K562 (cell line): ENCODE measurements at regions of chr1 and their contacts with region 1.

Region 1: DNA sequence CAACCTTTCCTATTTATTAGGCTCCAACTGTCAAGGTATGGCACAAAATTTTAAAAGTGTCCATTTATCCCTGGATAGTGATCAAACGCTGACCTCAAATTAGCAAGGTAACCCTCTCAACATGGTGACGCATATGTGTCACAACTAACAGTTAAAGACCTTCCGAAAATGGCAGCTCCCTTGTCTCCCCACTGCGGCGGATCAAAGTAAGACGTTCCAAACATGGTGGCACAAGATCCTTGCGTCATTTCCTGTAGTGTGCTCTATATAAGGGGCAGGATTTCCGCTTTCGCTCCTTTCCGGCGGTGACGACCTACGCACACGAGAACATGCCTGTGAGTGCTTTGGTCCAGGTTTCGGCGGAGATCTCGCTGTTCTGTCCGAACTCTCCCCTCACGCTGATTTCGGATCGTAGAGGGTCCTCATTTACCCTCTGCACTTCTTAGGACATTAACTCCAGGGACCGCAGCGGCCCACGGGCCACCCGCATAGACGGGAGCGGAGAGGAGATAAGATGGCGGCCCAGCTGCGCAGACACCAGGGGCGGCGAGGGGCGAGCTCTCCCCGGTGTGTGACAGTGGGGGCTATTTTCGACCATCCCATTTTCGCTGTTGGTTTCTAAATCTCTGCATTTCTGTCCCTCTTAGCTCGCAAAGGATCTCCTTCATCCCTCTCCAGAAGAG is at the start of gene RPS27:
- DNase-seq: peak; percentile 82 to 98 (median 89)
- ATAC-seq: peak; percentile 84
- H3K4me3 ChIP-seq: peak within 1 kb of the TSS; percentile 81
- H3K27ac ChIP-seq: peak within 1 kb of the TSS; percentile 98
- H3K4me1 ChIP-seq: peaks cover 6 to 11% of the 10 kb centered on the region in 2 experiments; a peak in 3 of 5 replicates
- H3K27me3 ChIP-seq: no peaks in the 10 kb centered on the region
- CTCF ChIP-seq: peak in 1 of 3 experiments; percentile 26; a peak in 1 of 6 replicates
- EP300 ChIP-seq: peak; percentile 53; the same call in 1 of the 2 replicates
- POLR2A ChIP-seq: peak; percentile 100
- RAD21 ChIP-seq: peak; percentile 25 to 26; a peak in 1 of 4 replicates
- polyA plus RNA-seq, gene RPS27: 6,302 to 8,843 TPM

Region 2: GRCh38 chr1:153404768-153405167 is 585.8 kb before region 1 on chr1:
- CTCF ChIA-PET with region 1: no interaction called
- POLR2A ChIA-PET with region 1: no interaction called
- in situ Hi-C with region 1: no loop called
- intact Hi-C with region 1: no loop called
- DNase-seq: peak; percentile 71 to 78 (median 75)
- ATAC-seq: peak; percentile 84
- H3K4me3 ChIP-seq: no peak overlapping the region
- H3K27ac ChIP-seq: no peak overlapping the region
- H3K4me1 ChIP-seq: no peaks in the 10 kb centered on the region; a peak in 1 of 5 replicates
- H3K27me3 ChIP-seq: peaks cover 8 to 27% of the 10 kb centered on the region in 2 experiments; a peak in 3 of 5 replicates
- CTCF ChIP-seq: peak; percentile 68 to 85 (median 81)
- EP300 ChIP-seq: no peak
- POLR2A ChIP-seq: no peak
- RAD21 ChIP-seq: peak in 1 of 2 experiments; percentile 50; a peak in 3 of 4 replicates

Region 3: GRCh38 chr1:153510984-153511410 is 479.6 kb before region 1 on chr1:
- CTCF ChIA-PET with region 1: interaction called, 19 read pairs
- POLR2A ChIA-PET with region 1: no interaction called
- in situ Hi-C with region 1: loop called (anchors 10 kb)
- intact Hi-C with region 1: loop called (anchors 5 kb)
- DNase-seq: peak; percentile 85 to 86 (median 86)
- ATAC-seq: peak; percentile 91
- H3K4me3 ChIP-seq: no peak overlapping the region
- H3K27ac ChIP-seq: no peak overlapping the region
- H3K4me1 ChIP-seq: peaks cover 7 to 21% of the 10 kb centered on the region in 2 experiments; a peak in 3 of 5 replicates
- H3K27me3 ChIP-seq: no peaks in the 10 kb centered on the region
- CTCF ChIP-seq: peak; percentile 95 to 96 (median 95)
- EP300 ChIP-seq: no peak
- POLR2A ChIP-seq: no peak
- RAD21 ChIP-seq: peak; percentile 97

Region 4: GRCh38 chr1:153775458-153776327 is 214.9 kb before region 1 on chr1:
- CTCF ChIA-PET with region 1: no interaction called
- POLR2A ChIA-PET with region 1: interaction called, 11 read pairs
- in situ Hi-C with region 1: no loop called
- intact Hi-C with region 1: loop called (anchors 5 kb)
- DNase-seq: peak in 3 of 4 experiments; percentile 66 to 77 (median 73)
- ATAC-seq: peak; percentile 73
- H3K4me3 ChIP-seq: peak overlapping the region; percentile 48
- H3K27ac ChIP-seq: no peak overlapping the region
- H3K4me1 ChIP-seq: peaks cover 10 to 55% of the 10 kb centered on the region in 2 experiments
- H3K27me3 ChIP-seq: no peaks in the 10 kb centered on the region
- CTCF ChIP-seq: no peak
- EP300 ChIP-seq: no peak
- POLR2A ChIP-seq: no peak
- RAD21 ChIP-seq: no peak

Region 5: DNA sequence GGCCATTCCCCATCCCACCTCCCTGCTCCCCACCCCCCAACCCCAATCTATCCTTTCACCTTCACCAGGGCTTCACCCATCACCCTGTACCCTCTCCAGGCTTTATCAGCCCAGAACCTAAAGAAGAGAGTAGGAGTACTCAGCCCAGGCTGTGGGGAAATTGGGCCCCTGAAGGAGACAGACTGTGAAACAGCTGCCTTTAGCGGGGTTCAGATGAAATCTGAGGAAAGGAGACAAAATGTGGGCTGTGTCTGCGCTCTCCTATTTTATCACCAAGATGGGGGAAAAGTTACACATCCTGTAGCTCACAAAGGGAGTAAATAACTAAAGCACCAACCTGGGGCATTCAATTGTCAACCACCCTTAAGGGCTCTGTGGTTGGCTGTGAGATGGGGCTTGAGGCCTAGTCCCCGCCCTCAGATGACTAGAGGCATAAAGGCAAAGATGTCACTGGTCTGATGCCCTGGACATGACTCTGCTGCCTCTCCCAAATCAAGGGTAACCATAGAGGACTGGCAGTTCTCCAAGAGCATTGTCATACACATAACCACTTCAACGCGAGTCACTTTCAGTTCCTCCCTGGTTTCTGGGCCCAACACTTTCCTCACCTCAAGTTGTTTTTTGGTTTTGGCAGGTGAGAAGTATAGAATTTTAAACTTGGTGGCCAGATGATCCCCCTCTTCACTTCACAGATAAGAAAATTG is 185.4 kb before region 1 on chr1:
- CTCF ChIA-PET with region 1: no interaction called
- POLR2A ChIA-PET with region 1: interaction called, 23 read pairs
- in situ Hi-C with region 1: no loop called
- intact Hi-C with region 1: no loop called
- DNase-seq: peak in 2 of 4 experiments; percentile 67 to 77
- ATAC-seq: peak; percentile 89
- H3K4me3 ChIP-seq: no peak overlapping the region
- H3K27ac ChIP-seq: peak overlapping the region; percentile 40; the same call in 2 of the 3 replicates
- H3K4me1 ChIP-seq: peaks cover 5 to 20% of the 10 kb centered on the region in 2 experiments; a peak in 4 of 5 replicates
- H3K27me3 ChIP-seq: no peaks in the 10 kb centered on the region
- CTCF ChIP-seq: no peak
- EP300 ChIP-seq: no peak
- POLR2A ChIP-seq: no peak
- RAD21 ChIP-seq: no peak

Region 6: GRCh38 chr1:153958111-153958960 is 32.3 kb before region 1 on chr1 and contains the start of gene CRTC2:
- CTCF ChIA-PET with region 1: no interaction called
- POLR2A ChIA-PET with region 1: interaction called, 20 read pairs
- in situ Hi-C with region 1: no loop called
- intact Hi-C with region 1: no loop called
- DNase-seq: peak; percentile 89 to 98 (median 94)
- ATAC-seq: peak; percentile 87
- H3K4me3 ChIP-seq: peak within 1 kb of the TSS; percentile 94
- H3K27ac ChIP-seq: peak within 1 kb of the TSS; percentile 83
- H3K4me1 ChIP-seq: peaks cover 27 to 33% of the 10 kb centered on the region in 2 experiments
- H3K27me3 ChIP-seq: no peaks in the 10 kb centered on the region
- CTCF ChIP-seq: peak in 1 of 3 experiments; percentile 8; a peak in 1 of 6 replicates
- EP300 ChIP-seq: no peak
- POLR2A ChIP-seq: peak; percentile 74
- RAD21 ChIP-seq: 0 out of 4 replicates have a peak, but pooled peaks of 1 of the 2 experiments have one; percentile 8
- polyA plus RNA-seq, gene CRTC2: 2.7 to 3.3 TPM

Region 7: DNA sequence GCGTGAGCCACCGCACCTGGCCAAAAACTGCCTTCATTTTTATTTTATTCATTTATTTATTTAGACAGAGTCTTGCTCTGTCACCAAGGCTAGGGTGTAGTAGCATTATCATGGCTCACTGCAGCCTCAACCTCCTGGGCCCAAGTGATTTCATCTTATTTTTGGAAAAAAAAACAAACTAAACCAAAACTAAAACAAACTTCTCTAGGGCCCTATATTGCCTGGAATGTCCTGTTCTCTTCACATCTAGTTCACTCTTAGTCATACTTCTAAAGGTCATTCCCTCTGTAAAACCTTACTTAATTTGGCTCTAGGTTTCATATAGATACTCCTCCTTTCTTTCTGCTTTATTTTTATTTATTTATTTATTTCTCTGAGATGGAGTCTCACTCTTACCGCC is 15.5 kb after region 1 on chr1:
- CTCF ChIA-PET with region 1: no interaction called
- POLR2A ChIA-PET with region 1: interaction called, 83 read pairs
- in situ Hi-C with region 1: no loop called
- intact Hi-C with region 1: no loop called
- DNase-seq: no peak
- ATAC-seq: no peak
- H3K4me3 ChIP-seq: no peak overlapping the region
- H3K27ac ChIP-seq: no peak overlapping the region
- H3K4me1 ChIP-seq: no peaks in the 10 kb centered on the region; a peak in 1 of 5 replicates
- H3K27me3 ChIP-seq: no peaks in the 10 kb centered on the region
- CTCF ChIP-seq: no peak
- EP300 ChIP-seq: no peak
- POLR2A ChIP-seq: no peak
- RAD21 ChIP-seq: no peak

Region 8: GRCh38 chr1:154183045-154183915 is 192.7 kb after region 1 on chr1:
- CTCF ChIA-PET with region 1: no interaction called
- POLR2A ChIA-PET with region 1: interaction called, 22 read pairs
- in situ Hi-C with region 1: no loop called
- intact Hi-C with region 1: loop called (anchors 5 kb)
- DNase-seq: peak; percentile 96 to 98 (median 96)
- ATAC-seq: peak; percentile 89
- H3K4me3 ChIP-seq: peak overlapping the region; percentile 71
- H3K27ac ChIP-seq: peak overlapping the region; percentile 90
- H3K4me1 ChIP-seq: peaks cover 26 to 53% of the 10 kb centered on the region in 2 experiments
- H3K27me3 ChIP-seq: no peaks in the 10 kb centered on the region
- CTCF ChIP-seq: 0 out of 6 replicates have a peak, but pooled peaks of 1 of the 3 experiments have one; percentile 0
- EP300 ChIP-seq: no peak
- POLR2A ChIP-seq: peak; percentile 98
- RAD21 ChIP-seq: no peak; a peak in 1 of 4 replicates

Region 9: DNA sequence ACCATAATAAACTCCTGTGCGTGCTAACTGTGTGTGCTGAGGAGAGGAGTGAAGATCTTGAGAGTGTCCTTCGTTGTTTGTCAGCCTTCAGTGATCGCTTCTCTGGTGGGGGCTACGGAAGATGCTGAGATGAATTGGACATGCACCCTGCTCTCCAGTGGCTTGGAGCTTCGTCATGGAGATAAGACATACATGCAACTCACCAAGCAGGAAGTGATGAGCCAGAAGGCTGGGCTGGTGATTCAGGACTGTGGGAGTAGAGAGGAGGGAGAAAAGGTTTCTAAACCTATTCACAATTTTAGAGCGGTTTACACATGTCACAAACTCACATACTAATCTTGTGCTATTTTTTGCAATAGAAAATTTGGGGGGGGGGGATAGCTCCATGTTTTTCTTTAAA is 746.2 kb after region 1 on chr1:
- CTCF ChIA-PET with region 1: no interaction called
- POLR2A ChIA-PET with region 1: no interaction called
- in situ Hi-C with region 1: no loop called
- intact Hi-C with region 1: no loop called
- DNase-seq: peak in 2 of 4 experiments; percentile 36 to 55
- ATAC-seq: peak; percentile 77
- H3K4me3 ChIP-seq: no peak overlapping the region
- H3K27ac ChIP-seq: no peak overlapping the region
- H3K4me1 ChIP-seq: peaks cover 1 to 4% of the 10 kb centered on the region in 2 experiments; a peak in 2 of 5 replicates
- H3K27me3 ChIP-seq: peaks cover 16 to 51% of the 10 kb centered on the region in 2 experiments
- CTCF ChIP-seq: no peak
- EP300 ChIP-seq: no peak
- POLR2A ChIP-seq: no peak
- RAD21 ChIP-seq: no peak